Activated CD4-positive, alpha-beta T cell treated with anti-CD3 and anti-CD28 coated beads, Interleukin-2, amount 10 ng/mL, durations not matched to agents 24 days and 14 days (primary cell): ENCODE measurements at regions of chr5 and their contacts with region 1.

Region 1: GRCh38 chr5:78984439-78985115 is 533 bp downstream of the ARSB start:
- DNase-seq: peak; percentile 95
- H3K4me3 Mint-ChIP-seq: peak overlapping the region; percentile 88
- H3K27ac Mint-ChIP-seq: peak overlapping the region; percentile 92
- H3K4me1 Mint-ChIP-seq: peaks cover 34% of the 10 kb centered on the region
- H3K27me3 Mint-ChIP-seq: no peaks in the 10 kb centered on the region

Region 2: GRCh38 chr5:78294248-78295034 is 690.1 kb before region 1 on chr5 and contains the start of gene AP3B1:
- intact Hi-C with region 1: loop called (anchors 10 kb)
- DNase-seq: peak; percentile 99
- H3K4me3 Mint-ChIP-seq: peak within 1 kb of the TSS; percentile 88
- H3K27ac Mint-ChIP-seq: peak within 1 kb of the TSS; percentile 97
- H3K4me1 Mint-ChIP-seq: peaks cover 26% of the 10 kb centered on the region
- H3K27me3 Mint-ChIP-seq: peaks cover 10% of the 10 kb centered on the region
- total RNA-seq, gene AP3B1: 40.1 and 45.5 TPM in 2 replicates

Region 3: GRCh38 chr5:78377056-78377717 is 607.4 kb before region 1 on chr5:
- intact Hi-C with region 1: no loop called
- DNase-seq: no peak
- H3K4me3 Mint-ChIP-seq: no peak overlapping the region
- H3K27ac Mint-ChIP-seq: no peak overlapping the region
- H3K4me1 Mint-ChIP-seq: peaks cover 3% of the 10 kb centered on the region
- H3K27me3 Mint-ChIP-seq: no peaks in the 10 kb centered on the region

Region 4: GRCh38 chr5:78953092-78953800 is 31.3 kb before region 1 on chr5:
- intact Hi-C with region 1: loop called (anchors 1 kb)
- DNase-seq: no peak
- H3K4me3 Mint-ChIP-seq: no peak overlapping the region
- H3K27ac Mint-ChIP-seq: no peak overlapping the region
- H3K4me1 Mint-ChIP-seq: peaks cover 16% of the 10 kb centered on the region
- H3K27me3 Mint-ChIP-seq: no peaks in the 10 kb centered on the region

Region 5: GRCh38 chr5:79514391-79515105 is 530.0 kb after region 1 on chr5:
- intact Hi-C with region 1: loop called (anchors 2 kb)
- DNase-seq: peak; percentile 97
- H3K4me3 Mint-ChIP-seq: peak overlapping the region; percentile 88
- H3K27ac Mint-ChIP-seq: peak overlapping the region; percentile 97
- H3K4me1 Mint-ChIP-seq: peaks cover 32% of the 10 kb centered on the region
- H3K27me3 Mint-ChIP-seq: peaks cover 23% of the 10 kb centered on the region